ENCODE measurements at regions of chr19 and their contacts with region 1.

Region 1: GRCh38 chr19:55383789-55384577 is at the start of gene TMEM238:
- DNase-seq: no peak
- H3K4me3 ChIP-seq: peak within 1 kb of the TSS; percentile 71 to 87 (median 77)
- H3K27ac ChIP-seq: peak within 1 kb of the TSS; percentile 88 to 94 (median 90)
- H3K4me1 ChIP-seq: peaks cover 42 to 50% (median 46%) of the 10 kb centered on the region in 4 donors
- H3K27me3 ChIP-seq: no peaks in the 10 kb centered on the region
- CTCF ChIP-seq: peak; percentile 13 to 50 (median 38)
- EP300 ChIP-seq: no peak
- POLR2A ChIP-seq: no peak
- total RNA-seq, gene TMEM238: 0.83 to 7.5 (median 1.00) TPM

Region 2: DNA sequence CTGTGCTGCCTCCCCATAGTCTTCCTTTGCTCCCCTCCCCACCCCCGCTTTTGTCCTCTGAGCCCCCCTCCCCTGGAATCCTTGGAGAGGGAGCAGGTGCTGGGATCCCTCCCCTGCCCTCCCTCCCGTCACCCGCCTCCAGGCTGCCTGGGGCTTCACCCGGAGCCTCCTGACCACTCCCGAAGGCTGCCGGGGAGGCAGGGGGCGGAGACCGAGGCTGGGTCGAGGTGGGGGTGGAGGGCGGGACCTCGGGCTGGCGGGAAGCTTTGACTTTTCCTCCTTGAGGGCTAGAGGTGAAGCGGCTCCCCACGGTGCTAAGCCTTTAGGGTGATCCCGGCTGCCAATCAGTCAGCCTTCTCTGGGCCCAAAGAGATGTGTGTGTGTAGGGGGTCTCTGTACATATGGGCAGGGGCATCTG is 42.8 kb before region 1 on chr19:
- intact Hi-C with region 1: loop called (anchors 5 kb)
- DNase-seq: no peak
- H3K4me3 ChIP-seq: peak overlapping the region; percentile 76 to 91 (median 84)
- H3K27ac ChIP-seq: peak overlapping the region; percentile 91 to 97 (median 93)
- H3K4me1 ChIP-seq: peaks cover 17 to 44% (median 38%) of the 10 kb centered on the region in 4 donors
- H3K27me3 ChIP-seq: peaks cover 0 to 3% (median 0%) of the 10 kb centered on the region in 4 donors
- CTCF ChIP-seq: no peak
- EP300 ChIP-seq: no peak
- POLR2A ChIP-seq: no peak

Region 3: GRCh38 chr19:55353803-55354697 is 29.9 kb before region 1 on chr19:
- intact Hi-C with region 1: no loop called
- DNase-seq: no peak
- H3K4me3 ChIP-seq: peak overlapping the region; percentile 41 to 63 (median 46)
- H3K27ac ChIP-seq: no peak overlapping the region
- H3K4me1 ChIP-seq: peaks cover 18 to 23% (median 20%) of the 10 kb centered on the region in 4 donors
- H3K27me3 ChIP-seq: peaks cover 11 to 91% (median 46%) of the 10 kb centered on the region in 4 donors
- CTCF ChIP-seq: no peak
- EP300 ChIP-seq: no peak
- POLR2A ChIP-seq: no peak

Region 4: GRCh38 chr19:55418185-55418584 is 34.2 kb after region 1 on chr19:
- intact Hi-C with region 1: no loop called
- DNase-seq: no peak
- H3K4me3 ChIP-seq: no peak overlapping the region
- H3K27ac ChIP-seq: no peak overlapping the region
- H3K4me1 ChIP-seq: no peaks in the 10 kb centered on the region
- H3K27me3 ChIP-seq: peaks cover 0 to 59% (median 0%) of the 10 kb centered on the region in 4 donors
- CTCF ChIP-seq: peak; percentile 53 to 65 (median 61)
- EP300 ChIP-seq: no peak
- POLR2A ChIP-seq: no peak